Heart left ventricle (tissue), 16 donors: ENCODE measurements at regions of chr4 and their contacts with region 1.

Region 1: DNA sequence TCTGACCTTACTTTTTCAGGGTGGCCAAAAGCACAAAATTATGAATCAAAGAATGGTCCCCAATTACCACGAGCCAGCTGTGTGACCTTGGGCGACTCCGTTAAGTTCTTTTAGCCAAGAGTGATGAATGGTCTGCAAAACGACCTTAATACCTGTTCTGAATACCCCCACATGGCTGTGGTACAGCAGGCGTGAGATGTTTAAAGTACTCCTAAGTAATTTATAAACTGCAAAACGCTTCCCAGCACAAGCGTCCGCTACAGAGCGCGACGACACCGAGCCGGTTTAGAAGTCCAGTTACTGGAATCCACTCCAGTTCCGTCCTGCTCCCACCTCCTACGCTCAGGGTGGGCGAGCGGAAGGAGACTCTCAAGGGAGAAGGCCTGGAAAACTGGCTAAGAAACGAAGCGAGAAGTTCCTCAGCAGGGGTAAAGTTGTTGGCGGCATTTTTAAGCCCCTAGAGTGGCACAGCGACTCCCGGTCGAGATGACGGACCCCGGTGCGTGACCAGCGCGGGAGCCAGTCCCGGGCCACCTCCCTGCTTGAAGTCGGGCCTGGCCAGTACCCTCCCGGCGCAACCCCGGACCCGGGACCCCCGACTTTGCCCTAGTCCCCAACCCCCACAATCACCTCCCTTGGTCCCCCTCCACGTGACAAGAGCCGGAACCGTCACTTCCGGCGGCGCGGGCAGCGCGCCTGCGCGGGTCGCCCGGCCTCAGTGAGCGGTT is 683 bp upstream of the BMP2K start:
- DNase-seq: peak; percentile 89 to 93 (median 90)
- ATAC-seq: peak; percentile 80 to 94 (median 92)
- H3K4me3 ChIP-seq: peak overlapping the region; percentile 29 to 94 (median 79)
- H3K27ac ChIP-seq: peak overlapping the region; percentile 92 to 100 (median 99)
- H3K4me1 ChIP-seq: peaks cover 0 to 42% (median 29%) of the 10 kb centered on the region in 12 donors
- H3K27me3 ChIP-seq: no peaks in the 10 kb centered on the region
- CTCF ChIP-seq: no peak
- POLR2A ChIP-seq: peak in 1 of 2 donors; percentile 31

Region 2: DNA sequence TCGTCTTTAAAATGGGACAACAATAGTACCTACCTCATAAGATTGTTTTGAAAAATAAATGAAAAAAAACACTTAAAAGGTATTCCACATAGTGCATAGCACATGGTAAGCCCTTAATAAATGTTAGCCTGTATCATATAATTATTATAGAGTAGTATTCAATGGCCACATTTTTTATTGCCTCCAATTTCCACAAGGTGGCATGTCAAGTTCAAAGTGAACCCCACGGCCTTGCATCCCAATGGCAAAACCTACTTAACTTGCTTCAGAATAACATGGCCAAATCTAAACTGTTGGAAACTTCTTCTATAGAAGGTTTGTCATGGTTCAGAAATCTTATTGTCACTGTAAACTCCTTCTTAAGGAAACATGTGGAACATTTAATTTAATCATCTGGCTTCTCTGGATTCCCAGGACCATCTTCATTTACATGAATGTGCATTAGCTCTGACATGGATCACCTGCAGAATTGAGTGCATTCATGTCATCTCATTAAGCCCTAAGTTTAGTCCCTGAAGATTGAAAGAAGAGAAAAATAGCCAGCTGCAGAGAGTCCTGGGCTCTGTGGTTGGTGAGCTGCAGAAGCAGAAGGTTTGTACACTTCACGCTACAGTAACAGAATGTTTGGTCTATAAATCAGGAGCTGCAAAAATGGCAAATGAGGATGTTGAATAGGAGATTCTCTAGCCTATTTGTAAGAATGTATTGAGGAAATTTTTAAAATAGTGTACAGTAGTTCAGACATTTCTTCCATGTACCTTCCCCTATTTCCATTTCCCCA is 162.9 kb before region 1 on chr4:
- intact Hi-C with region 1: loop called in 5 of 10 experiments (anchors 2 to 10 kb)
- DNase-seq: peak in 4 of 5 donors; percentile 29 to 41 (median 36)
- ATAC-seq: peak; percentile 53 to 81 (median 72)
- H3K4me3 ChIP-seq: no peak overlapping the region
- H3K27ac ChIP-seq: no peak overlapping the region
- H3K4me1 ChIP-seq: peaks cover 0 to 30% (median 5%) of the 10 kb centered on the region in 12 donors
- H3K27me3 ChIP-seq: no peaks in the 10 kb centered on the region
- CTCF ChIP-seq: peak; percentile 43 to 77 (median 67)
- POLR2A ChIP-seq: no peak

Region 3: GRCh38 chr4:78644744-78645330 is 130.6 kb before region 1 on chr4:
- intact Hi-C with region 1: loop called in 9 of 10 experiments (anchors 2 to 10 kb)
- DNase-seq: peak in 4 of 5 donors; percentile 63 to 74 (median 70)
- ATAC-seq: peak; percentile 77 to 94 (median 90)
- H3K4me3 ChIP-seq: no peak overlapping the region
- H3K27ac ChIP-seq: peak overlapping the region in 10 of 12 donors; percentile 54 to 94 (median 69)
- H3K4me1 ChIP-seq: peaks cover 0 to 52% (median 18%) of the 10 kb centered on the region in 12 donors
- H3K27me3 ChIP-seq: no peaks in the 10 kb centered on the region
- CTCF ChIP-seq: peak; percentile 79 to 97 (median 94)
- POLR2A ChIP-seq: no peak

Region 4: GRCh38 chr4:78704981-78705683 is 70.3 kb before region 1 on chr4:
- intact Hi-C with region 1: no loop called
- DNase-seq: no peak
- ATAC-seq: peak in 3 of 4 donors; percentile 54 to 77 (median 65)
- H3K4me3 ChIP-seq: no peak overlapping the region
- H3K27ac ChIP-seq: no peak overlapping the region
- H3K4me1 ChIP-seq: peaks cover 0 to 10% (median 0%) of the 10 kb centered on the region in 12 donors
- H3K27me3 ChIP-seq: no peaks in the 10 kb centered on the region
- CTCF ChIP-seq: no peak
- POLR2A ChIP-seq: no peak

Region 5: GRCh38 chr4:78845472-78845871 is 70.0 kb after region 1 on chr4:
- intact Hi-C with region 1: loop called in 2 of 10 experiments (anchors 5 to 10 kb)
- DNase-seq: no peak
- ATAC-seq: no peak
- H3K4me3 ChIP-seq: no peak overlapping the region
- H3K27ac ChIP-seq: no peak overlapping the region
- H3K4me1 ChIP-seq: peaks cover 0 to 12% (median 0%) of the 10 kb centered on the region in 12 donors
- H3K27me3 ChIP-seq: no peaks in the 10 kb centered on the region
- CTCF ChIP-seq: no peak
- POLR2A ChIP-seq: no peak